ENCODE measurements at regions of chr5 and their contacts with region 1.

Region 1: GRCh38 chr5:62779010-62779422 is 200.4 kb downstream of the LRRC70 start:
- ATAC-seq: peak; percentile 63 to 99 (median 80)
- H3K4me3 ChIP-seq: no peak overlapping the region
- H3K27ac ChIP-seq: no peak overlapping the region
- H3K4me1 ChIP-seq: no peaks in the 10 kb centered on the region

Region 2: DNA sequence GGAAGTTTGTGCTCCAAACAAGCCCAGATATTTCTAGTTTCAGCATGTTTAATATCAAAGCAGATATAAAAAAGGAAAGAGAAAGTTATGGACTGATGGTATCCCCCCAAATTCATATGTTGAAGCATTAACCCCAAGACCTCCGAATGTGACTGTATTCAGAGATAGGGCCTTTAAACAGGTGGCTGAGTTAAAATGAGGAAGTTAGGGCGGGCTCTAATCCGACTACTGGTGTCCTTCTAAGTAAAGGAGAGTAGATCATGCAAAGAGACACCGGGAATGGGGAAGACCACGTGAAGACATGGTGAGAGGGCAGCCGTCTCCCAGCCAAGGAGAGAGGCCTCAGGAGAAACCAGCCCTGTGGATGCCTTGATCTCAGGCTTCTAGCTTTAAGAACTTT is 797.1 kb before region 1 on chr5:
- in situ Hi-C with region 1: no loop called
- ATAC-seq: no peak
- H3K4me3 ChIP-seq: no peak overlapping the region
- H3K27ac ChIP-seq: no peak overlapping the region
- H3K4me1 ChIP-seq: no peaks in the 10 kb centered on the region

Region 3: GRCh38 chr5:62460578-62460983 is 318.4 kb before region 1 on chr5:
- in situ Hi-C with region 1: loop called in 3 of 9 experiments (anchors 25 kb)
- ATAC-seq: peak in 4 of 8 experiments; percentile 65 to 85 (median 74)
- H3K4me3 ChIP-seq: no peak overlapping the region
- H3K27ac ChIP-seq: no peak overlapping the region
- H3K4me1 ChIP-seq: no peaks in the 10 kb centered on the region